PC-3 (cell line): ENCODE measurements at regions of chr16 and their contacts with region 1.

Region 1: DNA sequence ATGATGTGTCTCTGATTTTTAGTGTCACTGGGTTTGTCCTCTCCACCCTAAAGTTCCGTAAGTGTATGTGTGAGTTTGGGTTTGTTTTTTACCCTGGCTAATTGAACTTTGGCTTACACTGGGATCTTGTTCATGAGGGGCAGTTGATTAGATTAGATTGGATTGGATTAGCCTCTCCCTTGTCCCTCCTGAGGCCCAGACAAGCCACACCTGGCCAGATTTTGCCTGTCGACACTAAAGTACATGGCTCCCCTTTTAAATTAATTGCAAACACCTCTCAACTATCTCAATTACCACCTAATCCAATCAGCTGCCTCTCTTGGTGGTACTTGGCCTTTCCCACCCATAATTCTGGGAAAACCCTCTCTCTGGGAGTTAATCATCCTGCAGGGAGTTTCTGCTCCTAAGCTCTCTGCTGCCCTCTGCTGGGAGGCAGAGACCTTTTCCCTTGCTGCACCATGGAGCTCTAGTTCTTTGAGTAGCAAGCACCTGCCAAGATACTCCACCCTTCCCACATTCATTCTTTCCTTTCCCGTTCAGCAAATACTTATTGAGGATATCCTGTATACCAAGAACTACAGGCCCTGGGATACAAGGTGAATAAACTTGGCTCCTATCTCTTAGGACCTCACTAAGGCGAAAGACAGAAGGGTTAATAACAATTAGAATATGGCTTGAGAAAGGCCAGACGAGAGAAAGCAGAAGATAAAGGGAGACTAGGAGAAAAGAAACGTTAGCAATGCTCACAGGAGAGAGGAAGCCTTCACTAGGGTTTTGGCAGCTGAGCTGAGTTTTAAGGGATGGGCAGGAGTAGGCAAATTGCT is 60.0 kb upstream of the MPHOSPH6 start:
- DNase-seq: peak; percentile 81
- ATAC-seq: peak; percentile 88
- H3K4me3 ChIP-seq: no peak overlapping the region
- H3K27ac ChIP-seq: no peak overlapping the region
- H3K4me1 ChIP-seq: no peaks in the 10 kb centered on the region
- H3K27me3 ChIP-seq: no peaks in the 10 kb centered on the region
- CTCF ChIP-seq: peak; percentile 89

Region 2: DNA sequence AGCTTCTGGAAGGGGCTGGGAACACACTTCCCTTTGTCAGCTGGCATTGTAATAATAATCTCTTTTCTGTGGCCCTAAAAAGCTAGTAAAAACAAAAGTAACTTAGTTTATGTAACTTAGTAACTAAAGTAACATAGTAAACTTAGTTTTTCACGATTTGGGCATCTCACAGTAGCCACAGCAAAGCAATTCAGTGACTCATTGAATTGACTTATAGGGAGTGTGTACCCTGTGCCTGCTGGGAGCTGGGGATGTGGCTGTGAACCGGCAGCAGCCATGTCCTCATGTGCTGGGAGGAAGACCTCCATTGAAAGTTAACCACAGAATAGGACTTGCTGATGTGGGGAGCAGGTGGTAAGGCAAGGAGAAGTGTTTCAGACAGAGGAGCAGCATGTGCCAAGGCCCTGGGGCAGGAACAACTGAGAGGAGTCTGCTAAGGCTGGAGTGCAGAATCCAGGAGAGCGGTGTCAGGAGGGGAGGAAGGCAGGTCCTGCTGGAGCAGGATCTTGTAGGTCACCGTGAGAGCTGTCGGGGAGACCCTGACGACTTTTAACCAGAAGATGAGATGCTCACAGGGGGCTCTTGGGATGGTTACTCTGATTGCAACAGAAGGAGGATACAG is 338.2 kb before region 1 on chr16:
- CTCF ChIA-PET with region 1: no interaction called
- POLR2A ChIA-PET with region 1: no interaction called
- intact Hi-C with region 1: loop called (anchors 2 kb)
- DNase-seq: peak; percentile 63
- ATAC-seq: peak; percentile 94
- H3K4me3 ChIP-seq: no peak overlapping the region
- H3K27ac ChIP-seq: peak overlapping the region; percentile 62
- H3K4me1 ChIP-seq: peaks cover 13% of the 10 kb centered on the region
- H3K27me3 ChIP-seq: no peaks in the 10 kb centered on the region
- CTCF ChIP-seq: no peak

Region 3: GRCh38 chr16:81940781-81941560 is 289.0 kb before region 1 on chr16:
- CTCF ChIA-PET with region 1: interaction called, 4 read pairs
- POLR2A ChIA-PET with region 1: interaction called, 4 read pairs
- intact Hi-C with region 1: loop called (anchors 1 kb)
- DNase-seq: peak; percentile 63
- ATAC-seq: peak; percentile 78
- H3K4me3 ChIP-seq: no peak overlapping the region
- H3K27ac ChIP-seq: no peak overlapping the region
- H3K4me1 ChIP-seq: peaks cover 6% of the 10 kb centered on the region
- H3K27me3 ChIP-seq: no peaks in the 10 kb centered on the region
- CTCF ChIP-seq: peak; percentile 73

Region 4: DNA sequence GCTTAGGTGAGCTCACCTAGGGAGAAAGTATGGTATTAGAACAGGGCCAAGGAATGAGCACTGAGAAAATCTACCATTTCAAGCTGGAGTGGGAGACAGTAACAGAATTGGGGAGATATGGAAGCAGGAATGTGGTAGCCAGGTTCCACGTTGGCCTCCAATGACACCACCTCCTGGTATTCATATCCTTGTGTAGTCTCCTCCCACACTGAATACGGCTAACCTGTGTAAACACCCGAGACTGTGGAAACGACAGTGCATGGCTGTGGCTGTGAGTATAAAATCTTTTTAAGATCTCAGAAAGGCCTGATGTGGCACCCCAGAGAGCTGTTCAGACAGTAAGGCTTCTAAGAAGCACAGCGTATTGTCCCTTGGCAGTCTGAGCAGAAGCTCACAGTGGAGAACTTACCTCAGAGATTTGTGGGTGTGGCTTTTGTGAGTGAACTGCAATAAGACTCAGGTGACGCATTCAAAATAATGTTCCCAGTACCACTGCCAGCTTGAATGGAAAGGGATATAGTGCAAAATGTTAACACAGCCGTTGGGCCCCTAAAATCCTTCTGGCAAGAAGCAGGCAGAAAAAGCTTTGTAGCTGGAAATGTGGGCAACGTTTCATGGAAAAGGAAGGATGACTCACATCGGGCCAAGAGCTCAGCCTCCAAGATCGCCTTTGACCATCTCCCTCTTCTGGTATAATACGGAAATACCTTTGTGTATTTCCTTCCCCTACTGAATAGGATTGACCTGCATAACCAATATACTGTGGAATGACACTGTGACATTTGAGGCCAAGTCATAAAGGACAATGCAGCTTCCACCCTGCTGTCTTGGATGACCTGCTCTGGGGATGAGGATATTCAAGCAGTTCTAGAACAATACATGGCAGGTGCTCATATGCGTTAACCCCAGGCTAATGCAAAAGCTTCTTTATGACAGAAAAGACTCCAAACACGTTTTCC is 233.1 kb before region 1 on chr16:
- CTCF ChIA-PET with region 1: interaction called, 7 read pairs
- POLR2A ChIA-PET with region 1: no interaction called
- intact Hi-C with region 1: loop called (anchors 1 kb)
- DNase-seq: peak; percentile 79
- ATAC-seq: peak; percentile 59
- H3K4me3 ChIP-seq: peak overlapping the region; percentile 25
- H3K27ac ChIP-seq: peak overlapping the region; percentile 92
- H3K4me1 ChIP-seq: peaks cover 38% of the 10 kb centered on the region
- H3K27me3 ChIP-seq: no peaks in the 10 kb centered on the region
- CTCF ChIP-seq: peak; percentile 61

Region 5: GRCh38 chr16:82031116-82032084 is 198.6 kb before region 1 on chr16:
- CTCF ChIA-PET with region 1: interaction called, 5 read pairs
- POLR2A ChIA-PET with region 1: no interaction called
- intact Hi-C with region 1: loop called (anchors 1 kb)
- DNase-seq: peak; percentile 71
- ATAC-seq: no peak
- H3K4me3 ChIP-seq: no peak overlapping the region
- H3K27ac ChIP-seq: peak overlapping the region; percentile 37; the same call in 1 of the 2 replicates
- H3K4me1 ChIP-seq: peaks cover 34% of the 10 kb centered on the region
- H3K27me3 ChIP-seq: peaks cover 1% of the 10 kb centered on the region; the same call in 1 of the 2 replicates
- CTCF ChIP-seq: peak; percentile 74

Region 6: DNA sequence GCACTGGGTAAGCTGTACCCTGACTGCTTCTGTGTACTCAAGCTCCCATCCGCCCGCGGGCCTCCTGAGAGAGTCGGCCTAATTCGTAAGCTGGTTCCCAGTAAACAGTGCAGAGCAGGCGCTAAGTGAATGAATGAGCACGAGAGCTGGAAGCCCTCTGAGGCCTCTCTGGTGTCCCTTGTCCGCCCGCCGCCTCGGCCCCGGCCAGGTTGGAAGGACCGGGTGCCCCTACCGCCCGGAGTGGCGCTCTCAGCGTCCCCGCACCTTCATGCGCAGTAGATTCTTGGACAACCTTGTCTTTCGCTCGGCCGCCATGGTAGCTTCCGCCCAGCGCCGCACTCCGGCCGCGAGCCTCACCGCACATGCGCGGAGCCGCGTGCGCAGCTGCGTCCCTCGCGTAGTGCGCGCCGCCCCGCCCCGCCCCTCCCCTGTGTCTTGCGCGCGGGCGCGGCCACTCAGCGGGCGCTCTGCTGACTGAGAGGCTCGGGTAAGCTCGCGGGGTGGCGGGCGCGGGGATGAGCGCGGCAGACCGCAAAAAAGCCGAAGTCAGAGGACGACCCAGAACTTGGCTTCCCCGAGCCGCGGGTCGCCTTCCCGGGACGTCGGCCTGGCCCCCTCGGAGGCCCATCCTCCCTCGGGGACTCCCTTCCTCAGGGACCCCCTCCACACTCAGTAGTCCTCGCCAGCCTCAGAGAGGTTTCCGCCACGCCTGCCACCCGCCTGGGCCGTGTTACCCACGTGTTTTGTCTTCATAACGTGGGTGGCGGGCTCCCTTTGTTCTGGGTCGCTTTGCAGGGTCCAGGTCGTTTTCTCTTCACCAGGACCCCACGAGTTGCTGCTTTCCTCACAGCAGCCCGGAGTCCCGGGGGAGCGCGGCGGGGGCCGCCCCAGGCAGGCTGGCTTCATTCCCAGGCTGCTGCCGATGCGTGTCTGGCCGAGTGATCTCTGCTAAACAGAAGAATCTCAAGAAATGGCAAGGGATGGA is 59.9 kb before region 1 on chr16 and contains the start of gene MPHOSPH6:
- CTCF ChIA-PET with region 1: interaction called, 3 read pairs
- POLR2A ChIA-PET with region 1: no interaction called
- intact Hi-C with region 1: loop called (anchors 10 kb)
- DNase-seq: peak; percentile 84
- ATAC-seq: peak; percentile 97
- H3K4me3 ChIP-seq: peak within 1 kb of the TSS; percentile 74
- H3K27ac ChIP-seq: no peak within 1 kb of the TSS; the same call in 1 of the 2 replicates
- H3K4me1 ChIP-seq: peaks cover 7% of the 10 kb centered on the region
- H3K27me3 ChIP-seq: peaks cover 23% of the 10 kb centered on the region; the same call in 1 of the 2 replicates
- CTCF ChIP-seq: no peak
- total RNA-seq, gene MPHOSPH6: 23.5 and 28.9 TPM in 2 replicates

Region 7: DNA sequence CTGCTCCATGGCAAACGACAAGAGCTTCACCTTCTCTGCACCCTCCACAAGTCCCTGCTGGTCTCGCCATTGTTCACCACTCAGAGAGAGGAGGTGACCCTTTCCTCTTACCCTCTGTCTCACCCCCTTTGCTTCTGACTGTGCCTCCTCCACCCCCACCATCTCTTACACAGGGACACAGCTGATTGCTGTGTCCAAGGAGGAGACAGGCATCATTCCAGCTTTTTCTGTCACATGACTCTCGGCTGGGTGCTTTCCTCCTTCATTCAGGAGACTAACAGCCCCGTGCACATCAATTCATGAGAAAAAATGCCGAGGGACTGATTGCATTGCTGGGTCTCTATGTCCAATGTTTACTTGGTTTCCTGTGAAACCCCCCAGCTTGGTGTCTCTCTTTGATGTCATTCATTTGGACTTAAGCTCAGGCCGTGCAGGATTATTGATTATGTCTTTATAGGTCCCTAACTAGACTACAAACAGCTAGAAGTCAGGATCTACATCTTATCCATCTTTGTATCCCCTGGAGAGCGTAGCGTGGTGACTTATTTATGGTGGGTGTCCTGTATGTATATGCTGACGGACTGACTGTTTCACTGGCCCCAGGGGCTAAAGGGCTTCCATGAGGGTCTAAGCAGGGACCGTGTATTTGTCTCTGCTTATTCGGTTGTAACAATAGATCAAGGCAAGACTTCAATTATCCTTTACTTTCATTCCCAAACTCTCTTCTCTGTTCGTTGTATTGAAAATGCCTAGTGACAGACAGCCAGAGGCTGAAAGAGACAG is 314.6 kb after region 1 on chr16:
- CTCF ChIA-PET with region 1: no interaction called
- POLR2A ChIA-PET with region 1: no interaction called
- intact Hi-C with region 1: no loop called
- DNase-seq: no peak
- ATAC-seq: no peak
- H3K4me3 ChIP-seq: no peak overlapping the region
- H3K27ac ChIP-seq: no peak overlapping the region
- H3K4me1 ChIP-seq: no peaks in the 10 kb centered on the region
- H3K27me3 ChIP-seq: peaks cover 42% of the 10 kb centered on the region
- CTCF ChIP-seq: no peak

Region 8: GRCh38 chr16:83215406-83216001 is 985.5 kb after region 1 on chr16:
- CTCF ChIA-PET with region 1: no interaction called
- POLR2A ChIA-PET with region 1: interaction called, 15 read pairs
- intact Hi-C with region 1: no loop called
- DNase-seq: peak; percentile 62
- ATAC-seq: peak; percentile 31; the same call in 1 of the 2 replicates
- H3K4me3 ChIP-seq: no peak overlapping the region
- H3K27ac ChIP-seq: no peak overlapping the region
- H3K4me1 ChIP-seq: no peaks in the 10 kb centered on the region
- H3K27me3 ChIP-seq: no peaks in the 10 kb centered on the region
- CTCF ChIP-seq: peak; percentile 71